ENCODE measurements at regions of chr11 and their contacts with region 1.

Region 1: DNA sequence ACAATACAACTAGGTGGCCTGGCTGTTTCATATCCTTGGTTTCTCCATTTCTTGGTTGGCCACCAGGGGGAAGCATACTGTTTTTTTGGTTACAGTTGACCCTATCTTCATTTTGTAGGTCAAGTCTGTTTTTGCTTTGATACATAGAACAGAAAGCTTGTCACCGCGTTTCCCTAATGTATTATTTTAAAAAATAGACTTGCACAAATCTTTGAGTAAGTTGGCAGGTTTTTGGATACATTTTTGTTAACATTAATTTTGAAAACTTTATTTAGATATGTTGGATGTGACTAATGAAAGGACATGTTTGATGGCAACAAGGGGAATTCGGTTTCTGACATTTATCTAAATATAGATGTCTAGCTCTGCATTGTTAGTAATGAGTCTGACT is 3.0 kb downstream of the NCR3LG1 start:
- H3K4me3 ChIP-seq: no peak overlapping the region
- H3K27ac ChIP-seq: no peak overlapping the region
- H3K4me1 ChIP-seq: no peaks in the 10 kb centered on the region
- CTCF ChIP-seq: peak; percentile 29; the same call in 1 of the 2 replicates

Region 2: GRCh38 chr11:17230867-17231851 is 123.4 kb before region 1 on chr11:
- CTCF ChIA-PET with region 1: interaction called, 11 read pairs
- POLR2A ChIA-PET with region 1: no interaction called
- H3K4me3 ChIP-seq: no peak overlapping the region
- H3K27ac ChIP-seq: no peak overlapping the region
- H3K4me1 ChIP-seq: no peaks in the 10 kb centered on the region
- CTCF ChIP-seq: no peak

Region 3: DNA sequence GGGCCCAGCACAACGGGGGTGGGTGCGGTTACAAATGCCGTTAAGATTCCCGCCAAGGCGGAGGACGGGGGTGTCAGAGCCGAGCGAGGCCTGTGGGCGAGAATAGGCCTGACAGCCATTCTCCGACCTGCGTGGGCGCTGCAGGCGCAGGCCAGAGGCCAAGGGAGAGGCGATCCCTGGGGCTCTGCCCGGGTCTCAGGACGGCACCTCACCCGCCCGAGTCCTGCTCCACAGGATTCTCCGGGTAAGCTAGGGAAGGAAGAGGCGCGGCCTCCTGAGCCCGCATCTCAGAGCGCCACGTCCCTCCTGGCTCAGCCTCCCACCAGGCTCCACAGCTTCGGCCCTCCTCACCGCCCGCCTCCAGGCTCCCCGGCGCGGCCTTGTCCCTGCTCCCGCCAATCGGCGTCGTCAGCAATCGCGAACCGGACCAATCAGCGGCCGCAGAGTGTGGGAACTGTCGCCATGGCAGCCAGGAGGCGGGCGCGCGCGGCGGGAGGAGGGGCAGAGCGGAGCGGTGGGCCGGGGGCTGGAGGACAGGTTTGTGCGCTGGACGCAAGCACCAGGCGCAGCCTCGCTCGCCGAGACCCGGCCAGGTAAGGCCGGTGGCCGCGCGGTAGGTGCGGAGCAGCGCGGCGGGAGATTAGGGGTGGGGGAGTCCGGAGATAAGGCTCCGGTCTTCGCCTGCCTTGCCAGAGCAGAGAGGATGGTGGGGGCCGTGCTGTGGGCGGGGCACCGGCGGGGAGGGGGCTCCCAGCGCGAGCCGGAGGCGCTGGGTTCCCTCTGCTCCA is 78.2 kb before region 1 on chr11 and contains the start of gene NUCB2:
- CTCF ChIA-PET with region 1: no interaction called
- POLR2A ChIA-PET with region 1: interaction called, 12 read pairs
- H3K4me3 ChIP-seq: peak within 1 kb of the TSS; percentile 93
- H3K27ac ChIP-seq: peak within 1 kb of the TSS; percentile 42; the same call in 1 of the 2 replicates
- H3K4me1 ChIP-seq: no peaks in the 10 kb centered on the region
- CTCF ChIP-seq: no peak

Region 4: GRCh38 chr11:17343907-17344306 is 10.7 kb before region 1 on chr11:
- CTCF ChIA-PET with region 1: interaction called, 12 read pairs
- POLR2A ChIA-PET with region 1: interaction called, 4 read pairs
- H3K4me3 ChIP-seq: no peak overlapping the region
- H3K27ac ChIP-seq: no peak overlapping the region
- H3K4me1 ChIP-seq: no peaks in the 10 kb centered on the region
- CTCF ChIP-seq: no peak

Region 5: DNA sequence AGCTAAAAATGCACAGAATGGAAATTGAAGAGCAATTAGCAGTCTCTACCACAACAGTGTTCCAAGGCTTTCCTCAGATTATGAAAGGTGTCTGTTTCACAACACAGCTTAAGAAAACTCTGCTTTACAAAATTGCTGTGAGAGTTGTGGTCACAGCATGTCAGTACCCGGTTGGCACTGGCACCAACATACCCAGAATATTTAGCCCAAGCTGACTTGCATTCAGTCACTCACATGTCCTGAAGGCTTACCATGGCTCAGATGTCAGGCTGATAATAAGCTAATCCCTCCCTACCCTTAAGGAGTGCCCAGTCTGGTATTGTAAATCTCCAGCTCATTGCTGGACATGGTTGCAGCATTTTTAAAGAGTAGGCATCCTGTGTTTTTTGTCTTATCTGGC is 11.9 kb after region 1 on chr11:
- CTCF ChIA-PET with region 1: interaction called, 35 read pairs
- POLR2A ChIA-PET with region 1: interaction called, 3 read pairs
- H3K4me3 ChIP-seq: no peak overlapping the region
- H3K27ac ChIP-seq: no peak overlapping the region
- H3K4me1 ChIP-seq: no peaks in the 10 kb centered on the region
- CTCF ChIP-seq: no peak

Region 6: GRCh38 chr11:17371614-17372013 is 17.0 kb after region 1 on chr11:
- CTCF ChIA-PET with region 1: interaction called, 35 read pairs
- POLR2A ChIA-PET with region 1: no interaction called
- H3K4me3 ChIP-seq: no peak overlapping the region
- H3K27ac ChIP-seq: no peak overlapping the region
- H3K4me1 ChIP-seq: no peaks in the 10 kb centered on the region
- CTCF ChIP-seq: no peak

Region 7: GRCh38 chr11:17432002-17432401 is 77.4 kb after region 1 on chr11:
- CTCF ChIA-PET with region 1: no interaction called
- POLR2A ChIA-PET with region 1: no interaction called
- H3K4me3 ChIP-seq: no peak overlapping the region
- H3K27ac ChIP-seq: no peak overlapping the region
- H3K4me1 ChIP-seq: 0 out of 2 replicates have a peak, but pooled peaks cover 2% of the 10 kb centered on the region
- CTCF ChIP-seq: no peak

Measured in HEK293 (cell line).